GM12878 (cell line): ENCODE measurements at regions of chr12 and their contacts with region 1.

Region 1: GRCh38 chr12:117874842-117875434 is 93.9 kb downstream of the KSR2 start:
- DNase-seq: no peak
- ATAC-seq: peak; percentile 90
- H3K4me3 ChIP-seq: no peak overlapping the region
- H3K27ac ChIP-seq: no peak overlapping the region
- H3K4me1 ChIP-seq: no peaks in the 10 kb centered on the region
- H3K27me3 ChIP-seq: no peaks in the 10 kb centered on the region
- CTCF ChIP-seq: peak; percentile 85 to 89 (median 86)
- EP300 ChIP-seq: no peak
- POLR2A ChIP-seq: no peak
- RAD21 ChIP-seq: peak; percentile 89

Region 2: GRCh38 chr12:117486840-117487659 is 387.9 kb before region 1 on chr12:
- CTCF ChIA-PET with region 1: no interaction called
- POLR2A ChIA-PET with region 1: no interaction called
- RAD21 ChIA-PET with region 1: no interaction called
- SMC1A ChIA-PET with region 1: no interaction called
- in situ Hi-C with region 1: no loop called
- intact Hi-C with region 1: no loop called
- DNase-seq: no peak
- ATAC-seq: no peak
- H3K4me3 ChIP-seq: no peak overlapping the region
- H3K27ac ChIP-seq: no peak overlapping the region
- H3K4me1 ChIP-seq: no peaks in the 10 kb centered on the region
- H3K27me3 ChIP-seq: no peaks in the 10 kb centered on the region
- CTCF ChIP-seq: no peak
- EP300 ChIP-seq: no peak
- POLR2A ChIP-seq: no peak
- RAD21 ChIP-seq: no peak

Region 3: GRCh38 chr12:117787603-117788002 is 87.3 kb before region 1 on chr12:
- CTCF ChIA-PET with region 1: no interaction called
- POLR2A ChIA-PET with region 1: no interaction called
- RAD21 ChIA-PET with region 1: no interaction called
- SMC1A ChIA-PET with region 1: no interaction called
- in situ Hi-C with region 1: no loop called
- intact Hi-C with region 1: no loop called
- DNase-seq: no peak
- ATAC-seq: no peak
- H3K4me3 ChIP-seq: no peak overlapping the region
- H3K27ac ChIP-seq: no peak overlapping the region
- H3K4me1 ChIP-seq: no peaks in the 10 kb centered on the region
- H3K27me3 ChIP-seq: no peaks in the 10 kb centered on the region
- CTCF ChIP-seq: no peak
- EP300 ChIP-seq: no peak
- POLR2A ChIP-seq: no peak
- RAD21 ChIP-seq: no peak

Region 4: DNA sequence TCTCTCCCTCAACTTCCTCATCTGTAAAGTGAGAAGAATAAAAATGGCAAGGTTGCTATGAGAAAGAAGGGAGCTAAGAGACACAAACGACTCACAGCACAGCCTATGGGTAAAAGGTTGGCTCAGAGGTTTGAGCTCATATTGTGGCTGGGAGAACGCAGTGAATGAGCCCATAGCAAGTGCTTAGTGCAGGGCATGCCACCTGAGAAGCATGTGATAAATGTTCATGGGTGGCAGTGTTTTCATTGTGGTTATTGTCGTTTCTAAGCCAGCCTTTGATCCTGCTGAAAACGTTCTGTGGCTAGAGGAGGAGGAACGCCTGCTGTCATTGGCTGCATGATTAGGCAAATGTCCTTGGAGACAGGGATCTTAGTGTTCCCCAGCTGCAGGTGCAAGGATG is 56.5 kb before region 1 on chr12:
- CTCF ChIA-PET with region 1: no interaction called
- POLR2A ChIA-PET with region 1: no interaction called
- RAD21 ChIA-PET with region 1: no interaction called
- SMC1A ChIA-PET with region 1: no interaction called
- in situ Hi-C with region 1: no loop called
- intact Hi-C with region 1: no loop called
- DNase-seq: no peak
- ATAC-seq: no peak
- H3K4me3 ChIP-seq: no peak overlapping the region
- H3K27ac ChIP-seq: no peak overlapping the region
- H3K4me1 ChIP-seq: no peaks in the 10 kb centered on the region
- H3K27me3 ChIP-seq: no peaks in the 10 kb centered on the region
- CTCF ChIP-seq: no peak
- EP300 ChIP-seq: no peak
- POLR2A ChIP-seq: no peak
- RAD21 ChIP-seq: no peak

Region 5: GRCh38 chr12:117897372-117898161 is 22.6 kb after region 1 on chr12:
- CTCF ChIA-PET with region 1: interaction called, 6 read pairs
- POLR2A ChIA-PET with region 1: no interaction called
- RAD21 ChIA-PET with region 1: interaction called, 8 read pairs
- SMC1A ChIA-PET with region 1: interaction called, 11 read pairs
- in situ Hi-C with region 1: no loop called
- intact Hi-C with region 1: no loop called
- DNase-seq: peak; percentile 57
- ATAC-seq: peak; percentile 86
- H3K4me3 ChIP-seq: no peak overlapping the region
- H3K27ac ChIP-seq: peak overlapping the region; percentile 14; the same call in 1 of the 2 replicates
- H3K4me1 ChIP-seq: peaks cover 6% of the 10 kb centered on the region; the same call in 1 of the 2 replicates
- H3K27me3 ChIP-seq: no peaks in the 10 kb centered on the region
- CTCF ChIP-seq: no peak
- EP300 ChIP-seq: peak in 1 of 2 experiments; percentile 41; a peak in 1 of 4 replicates
- POLR2A ChIP-seq: no peak
- RAD21 ChIP-seq: no peak

Region 6: DNA sequence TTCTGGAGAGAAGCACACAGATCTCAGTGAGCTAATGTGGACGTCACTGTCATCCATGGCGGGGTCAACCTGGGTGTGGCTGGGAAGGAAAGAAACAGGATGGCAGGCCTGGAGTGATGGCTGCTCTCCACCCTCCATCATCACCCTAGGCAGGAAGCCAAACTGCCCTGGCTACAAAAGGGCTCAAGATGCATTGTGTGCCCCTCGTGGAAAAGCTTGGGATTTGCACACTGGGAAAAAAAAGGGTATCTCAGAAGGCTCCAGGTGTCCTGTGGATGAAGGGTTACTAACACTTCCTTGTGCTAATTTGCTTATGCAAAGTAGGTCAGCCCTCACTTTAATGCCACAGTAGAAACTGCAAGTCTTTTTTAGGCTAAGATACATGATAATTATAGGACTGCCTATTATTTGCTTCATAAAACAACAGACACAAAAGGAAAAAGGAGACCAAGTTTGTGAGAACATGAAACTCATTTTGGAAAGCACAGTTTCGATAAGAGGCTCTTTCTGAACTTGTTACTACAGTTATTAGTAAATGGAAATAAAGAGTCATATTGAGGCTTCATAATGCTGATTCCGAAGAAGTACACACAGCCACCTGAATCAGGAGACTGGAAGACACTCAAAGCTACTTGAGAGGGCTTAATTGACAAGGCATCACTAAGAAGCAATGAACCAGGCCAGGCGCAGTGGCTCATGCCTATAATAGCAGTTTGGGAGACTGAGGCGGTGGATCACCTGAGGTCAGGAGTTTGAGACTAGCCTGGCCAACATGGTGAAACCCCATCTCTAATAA is 160.5 kb after region 1 on chr12:
- CTCF ChIA-PET with region 1: interaction called, 111 read pairs
- POLR2A ChIA-PET with region 1: interaction called, 3 read pairs
- RAD21 ChIA-PET with region 1: interaction called, 24 read pairs
- SMC1A ChIA-PET with region 1: interaction called, 64 read pairs
- in situ Hi-C with region 1: no loop called
- intact Hi-C with region 1: loop called (anchors 2 kb)
- DNase-seq: peak; percentile 90
- ATAC-seq: peak; percentile 91
- H3K4me3 ChIP-seq: no peak overlapping the region
- H3K27ac ChIP-seq: peak overlapping the region; percentile 75
- H3K4me1 ChIP-seq: peaks cover 29% of the 10 kb centered on the region
- H3K27me3 ChIP-seq: no peaks in the 10 kb centered on the region
- CTCF ChIP-seq: peak in 2 of 3 experiments; percentile 5 to 13; a peak in 1 of 6 replicates
- EP300 ChIP-seq: peak; percentile 60 to 74; a peak in 3 of 4 replicates
- POLR2A ChIP-seq: 0 out of 2 replicates have a peak, but pooled peaks have one; percentile 19
- RAD21 ChIP-seq: no peak

Region 7: DNA sequence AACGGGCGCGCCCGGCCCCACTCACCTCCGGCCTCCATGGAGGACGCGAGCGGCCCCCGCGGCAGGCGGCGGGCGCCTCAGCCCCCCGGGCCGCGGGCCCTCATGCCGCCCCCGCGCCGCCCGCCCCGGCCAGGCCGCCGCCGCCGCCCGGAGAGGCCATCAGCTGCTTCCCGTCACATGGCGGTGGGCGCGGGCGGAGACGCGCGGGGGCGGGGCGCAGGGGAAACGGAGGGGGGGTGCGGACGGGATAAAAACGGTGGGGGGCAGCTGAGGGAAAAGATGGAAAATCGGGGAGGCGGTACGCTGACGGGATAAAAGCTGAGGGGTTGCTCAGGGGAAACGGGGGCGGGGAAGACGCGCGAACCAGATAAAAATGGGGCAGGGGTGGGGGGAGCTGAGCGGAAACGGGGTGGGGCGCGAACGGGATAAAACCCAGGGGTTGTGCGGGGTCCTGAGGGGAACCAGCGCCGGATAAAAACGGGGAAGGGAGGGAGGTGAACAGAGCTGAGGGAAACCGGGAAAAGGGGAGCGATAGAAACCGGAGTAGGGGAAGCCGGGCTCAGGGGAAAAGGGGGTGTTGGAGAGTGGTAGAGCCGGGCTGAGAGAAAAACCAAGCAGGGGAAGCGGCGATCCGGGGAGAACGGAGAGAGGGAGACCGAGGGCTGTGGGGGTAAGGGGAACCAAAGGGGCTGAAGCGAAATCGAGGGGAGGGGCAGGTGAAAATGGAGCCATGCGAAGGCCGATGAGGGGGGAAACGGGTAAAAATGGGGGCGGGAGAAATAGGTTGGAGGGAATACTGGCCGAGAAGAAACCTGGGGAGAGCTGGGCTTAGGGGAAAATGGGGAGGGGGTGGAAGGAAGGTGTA is 186.3 kb after region 1 on chr12 and contains the start of gene WSB2:
- CTCF ChIA-PET with region 1: interaction called, 72 read pairs
- POLR2A ChIA-PET with region 1: interaction called, 3 read pairs
- RAD21 ChIA-PET with region 1: interaction called, 44 read pairs
- SMC1A ChIA-PET with region 1: interaction called, 28 read pairs
- in situ Hi-C with region 1: loop called (anchors 5 kb)
- intact Hi-C with region 1: no loop called
- DNase-seq: no peak
- ATAC-seq: peak; percentile 40
- H3K4me3 ChIP-seq: peak within 1 kb of the TSS; percentile 96
- H3K27ac ChIP-seq: peak within 1 kb of the TSS; percentile 93
- H3K4me1 ChIP-seq: peaks cover 13% of the 10 kb centered on the region
- H3K27me3 ChIP-seq: no peaks in the 10 kb centered on the region
- CTCF ChIP-seq: no peak
- EP300 ChIP-seq: no peak
- POLR2A ChIP-seq: peak; percentile 50; the same call in 1 of the 2 replicates
- RAD21 ChIP-seq: no peak
- polyA plus RNA-seq, gene WSB2: 30.0 to 33.6 TPM

Region 8: DNA sequence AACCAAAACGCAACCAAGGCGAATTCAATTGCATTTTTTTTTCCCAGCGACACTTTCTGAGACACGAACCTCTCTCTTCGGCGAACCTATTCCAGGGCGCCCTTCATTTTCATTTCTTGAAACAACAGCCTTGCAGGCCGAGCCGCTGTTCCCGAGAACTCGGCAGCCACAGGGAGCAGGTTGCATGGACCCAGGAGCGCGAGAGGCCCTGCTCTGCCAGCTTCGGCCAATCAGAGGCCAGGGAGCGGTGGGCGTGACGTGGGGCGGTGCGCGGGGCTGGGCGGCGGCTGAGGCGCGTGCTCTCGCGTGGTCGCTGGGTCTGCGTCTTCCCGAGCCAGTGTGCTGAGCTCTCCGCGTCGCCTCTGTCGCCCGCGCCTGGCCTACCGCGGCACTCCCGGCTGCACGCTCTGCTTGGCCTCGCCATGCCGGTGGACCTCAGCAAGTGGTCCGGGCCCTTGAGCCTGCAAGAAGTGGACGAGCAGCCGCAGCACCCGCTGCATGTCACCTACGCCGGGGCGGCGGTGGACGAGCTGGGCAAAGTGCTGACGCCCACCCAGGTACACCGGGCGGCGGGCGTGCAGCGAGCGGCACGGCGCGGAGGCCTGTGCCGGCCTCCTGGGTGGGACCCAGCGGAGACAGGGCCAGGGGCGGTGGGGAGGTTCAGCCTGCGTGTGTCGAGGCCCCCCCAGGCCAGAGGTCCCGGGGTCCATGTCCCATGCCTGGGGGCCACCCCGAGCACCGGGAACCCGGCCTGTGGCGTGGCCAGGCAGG is 261.0 kb after region 1 on chr12 and contains the start of gene PEBP1:
- CTCF ChIA-PET with region 1: no interaction called
- POLR2A ChIA-PET with region 1: no interaction called
- RAD21 ChIA-PET with region 1: interaction called, 4 read pairs
- SMC1A ChIA-PET with region 1: interaction called, 5 read pairs
- in situ Hi-C with region 1: no loop called
- intact Hi-C with region 1: loop called (anchors 10 kb)
- DNase-seq: peak; percentile 77
- ATAC-seq: peak; percentile 98
- H3K4me3 ChIP-seq: peak within 1 kb of the TSS; percentile 86
- H3K27ac ChIP-seq: peak within 1 kb of the TSS; percentile 86
- H3K4me1 ChIP-seq: peaks cover 11% of the 10 kb centered on the region
- H3K27me3 ChIP-seq: no peaks in the 10 kb centered on the region
- CTCF ChIP-seq: no peak
- EP300 ChIP-seq: no peak
- POLR2A ChIP-seq: peak; percentile 97
- RAD21 ChIP-seq: no peak
- polyA plus RNA-seq, gene PEBP1: 79.4 to 150 TPM